Activated CD4-positive, alpha-beta memory T cell treated with anti-CD3 and anti-CD28 coated beads for 36 hours (primary cell): ENCODE measurements at regions of chr1 and their contacts with region 1.

Region 1: DNA sequence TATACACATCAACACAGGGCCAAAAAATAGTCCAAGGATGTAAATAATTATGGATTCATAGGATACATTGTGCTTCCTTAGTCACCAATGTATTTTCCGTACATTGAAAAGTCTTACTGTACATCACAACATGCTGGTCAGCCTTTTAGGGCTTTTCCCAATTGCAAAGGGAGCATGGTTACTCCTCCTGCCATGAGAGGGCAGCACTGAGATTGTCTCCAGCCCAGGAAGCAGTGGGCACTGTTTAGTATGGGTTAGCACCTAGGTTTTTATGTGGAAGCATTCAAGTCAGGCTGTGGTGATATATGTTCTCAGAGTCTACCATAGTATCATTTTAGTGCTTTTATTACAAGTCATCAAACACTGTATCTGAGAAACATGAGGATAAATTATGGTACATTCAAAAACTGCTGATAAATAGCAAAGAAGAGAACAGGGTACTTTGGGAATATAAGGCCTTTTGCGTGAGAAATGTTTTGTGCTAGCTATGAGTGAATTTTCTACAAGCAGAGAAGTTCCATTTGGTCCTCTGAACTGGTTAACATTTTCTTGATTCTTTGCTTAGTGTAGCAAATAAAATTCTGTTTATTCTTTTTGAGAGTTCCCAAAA is 34.0 kb downstream of the ST6GALNAC5 start:
- DNase-seq: peak; percentile 34
- H3K4me3 Mint-ChIP-seq: no peak overlapping the region
- H3K27ac Mint-ChIP-seq: no peak overlapping the region
- H3K4me1 Mint-ChIP-seq: no peaks in the 10 kb centered on the region
- H3K27me3 Mint-ChIP-seq: peaks cover 2% of the 10 kb centered on the region

Region 2: DNA sequence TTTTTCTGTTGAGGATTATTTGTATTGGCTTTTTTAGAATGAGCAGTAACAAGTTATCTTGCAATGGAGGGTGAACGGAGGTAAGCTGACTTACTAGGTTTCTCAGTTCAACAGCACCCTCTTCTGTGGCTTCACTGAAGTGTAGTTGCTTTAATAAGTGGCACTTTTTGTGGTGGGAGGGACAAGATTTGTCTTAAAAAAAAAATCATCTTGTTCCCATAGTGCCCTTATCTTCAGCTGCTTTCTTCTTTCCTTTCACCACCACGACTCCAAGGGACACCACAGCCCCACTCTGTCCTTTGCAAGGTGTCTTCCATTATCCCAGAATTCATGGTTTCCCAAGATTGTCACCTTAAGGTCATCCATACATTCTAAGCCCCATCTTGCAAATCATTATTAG is 225.0 kb after region 1 on chr1:
- CTCF ChIA-PET with region 1: no interaction called
- POLR2A ChIA-PET with region 1: no interaction called
- intact Hi-C with region 1: loop called (anchors 2 kb)
- DNase-seq: no peak
- H3K4me3 Mint-ChIP-seq: no peak overlapping the region
- H3K27ac Mint-ChIP-seq: no peak overlapping the region
- H3K4me1 Mint-ChIP-seq: no peaks in the 10 kb centered on the region
- H3K27me3 Mint-ChIP-seq: no peaks in the 10 kb centered on the region